CD4-positive, alpha-beta memory T cell (primary cell): ENCODE measurements at regions of chr4 and their contacts with region 1.

Region 1: GRCh38 chr4:1200425-1201035 is 28.1 kb upstream of the SPON2 start:
- DNase-seq: no peak
- H3K4me3 ChIP-seq: peak overlapping the region; percentile 49 to 58
- H3K4me3 Mint-ChIP-seq: peak overlapping the region; percentile 68 to 89 (median 82)
- H3K27ac ChIP-seq: peak overlapping the region; percentile 50
- H3K27ac Mint-ChIP-seq: peak overlapping the region; percentile 64 to 100 (median 98)
- H3K4me1 ChIP-seq: peaks cover 56% of the 10 kb centered on the region
- H3K4me1 Mint-ChIP-seq: peaks cover 23 to 61% (median 40%) of the 10 kb centered on the region in 4 donors
- H3K27me3 ChIP-seq: no peaks in the 10 kb centered on the region
- H3K27me3 Mint-ChIP-seq: no peaks in the 10 kb centered on the region

Region 2: DNA sequence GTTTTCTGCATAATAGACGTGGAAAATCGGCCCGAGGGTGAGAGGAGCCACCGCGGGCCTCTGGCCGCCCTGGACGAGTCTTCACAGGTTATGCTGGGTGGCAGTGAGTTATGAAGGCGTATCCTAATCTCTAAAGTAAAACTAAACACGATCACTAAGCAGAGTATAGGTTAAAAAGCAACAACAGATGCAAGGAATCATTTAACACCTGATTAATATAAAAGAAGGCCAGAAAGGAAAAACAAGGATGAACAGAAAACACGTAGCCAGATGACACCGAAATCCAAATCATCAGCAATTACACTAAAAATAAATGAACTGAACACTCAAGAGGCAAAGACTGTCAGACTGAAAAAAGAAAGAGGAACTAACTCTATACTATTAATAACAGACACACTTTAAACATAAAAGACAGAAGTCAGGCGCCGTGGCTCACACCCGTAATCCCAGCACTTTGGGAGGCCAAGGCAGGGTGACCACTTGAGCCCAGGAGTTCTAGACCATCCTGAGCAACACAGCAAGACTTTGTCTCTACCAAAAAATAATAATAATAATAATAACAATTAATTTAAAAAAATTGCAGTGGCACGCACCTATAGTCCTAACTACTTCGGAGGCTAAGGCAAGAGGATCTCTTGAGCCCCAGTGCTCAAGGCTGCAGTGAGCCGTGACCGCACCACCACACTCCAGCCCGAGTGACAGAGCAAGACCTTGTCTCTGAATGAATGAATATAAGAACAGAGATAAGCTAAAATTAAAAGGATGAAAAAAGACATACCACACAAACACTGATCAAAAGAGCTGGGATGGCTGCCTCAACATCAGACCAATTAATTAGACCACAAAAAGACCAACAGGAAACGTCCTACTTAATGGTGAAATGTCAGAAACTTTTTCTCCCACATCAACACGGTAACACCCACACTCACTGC is 18.4 kb after region 1 on chr4:
- CTCF ChIA-PET with region 1: interaction called, 22 read pairs
- POLR2A ChIA-PET with region 1: interaction called, 16 read pairs
- intact Hi-C with region 1: loop called (anchors 2 kb)
- DNase-seq: no peak
- H3K4me3 ChIP-seq: no peak overlapping the region
- H3K4me3 Mint-ChIP-seq: peak overlapping the region in 6 of 8 donors; percentile 21 to 56 (median 42)
- H3K27ac ChIP-seq: no peak overlapping the region
- H3K27ac Mint-ChIP-seq: peak overlapping the region; percentile 7 to 86 (median 58)
- H3K4me1 ChIP-seq: peaks cover 40% of the 10 kb centered on the region
- H3K4me1 Mint-ChIP-seq: peaks cover 25 to 58% (median 37%) of the 10 kb centered on the region in 4 donors
- H3K27me3 ChIP-seq: no peaks in the 10 kb centered on the region
- H3K27me3 Mint-ChIP-seq: no peaks in the 10 kb centered on the region